ENCODE measurements at regions of chrX and their contacts with region 1.

Region 1: DNA sequence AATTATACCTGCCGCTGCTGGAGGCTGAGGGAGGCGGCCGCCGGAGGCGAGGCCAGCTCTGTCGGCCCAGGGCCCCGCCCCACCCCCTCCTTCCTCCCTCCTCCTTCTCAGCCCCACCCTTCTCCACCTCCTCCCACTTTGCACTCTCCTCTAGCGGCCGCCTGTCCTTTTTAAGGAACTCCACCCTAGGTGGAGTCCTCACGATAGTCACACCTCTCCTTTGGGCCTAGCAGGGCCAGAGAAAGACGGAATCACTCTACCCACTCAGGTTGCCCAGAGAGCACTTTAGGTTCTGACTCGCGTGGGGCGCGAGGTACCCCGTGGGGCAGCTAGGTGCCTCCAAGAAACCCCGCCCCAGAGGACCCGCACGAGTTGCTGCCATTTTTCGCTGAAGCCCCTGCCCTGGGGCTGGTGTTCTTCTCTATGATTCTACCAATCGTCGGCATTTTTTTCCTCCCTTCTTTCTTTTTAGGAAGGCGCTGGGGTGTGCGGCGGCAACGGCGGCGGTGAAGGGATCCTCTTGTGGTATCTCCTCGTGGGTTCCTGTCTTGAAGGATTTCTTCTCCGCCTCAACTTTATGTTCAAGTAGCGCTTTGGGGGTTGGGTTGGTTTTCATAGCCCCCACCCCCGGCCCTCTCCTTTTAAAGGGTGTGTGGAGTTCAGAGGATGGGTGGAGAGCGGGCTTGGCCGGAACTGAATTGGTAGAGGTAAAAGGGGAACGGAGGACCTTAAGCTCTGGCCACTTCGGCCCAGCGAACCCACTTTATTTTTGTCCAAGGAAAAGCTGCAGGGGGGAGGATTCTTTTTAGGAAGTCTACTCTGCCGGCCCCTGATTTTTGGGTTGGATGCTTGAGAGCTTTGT is at the start of gene KLF8:
- DNase-seq: no peak
- total RNA-seq, gene KLF8: 3.6 TPM

Region 2: GRCh38 chrX:55636109-55636508 is 596.3 kb before region 1 on chrX:
- intact Hi-C with region 1: no loop called
- DNase-seq: no peak

Region 3: GRCh38 chrX:55717521-55718497 is 514.6 kb before region 1 on chrX and contains the start of gene RRAGB:
- intact Hi-C with region 1: loop called (anchors 10 kb)
- DNase-seq: peak; percentile 96
- total RNA-seq, gene RRAGB: 11.9 TPM

Region 4: DNA sequence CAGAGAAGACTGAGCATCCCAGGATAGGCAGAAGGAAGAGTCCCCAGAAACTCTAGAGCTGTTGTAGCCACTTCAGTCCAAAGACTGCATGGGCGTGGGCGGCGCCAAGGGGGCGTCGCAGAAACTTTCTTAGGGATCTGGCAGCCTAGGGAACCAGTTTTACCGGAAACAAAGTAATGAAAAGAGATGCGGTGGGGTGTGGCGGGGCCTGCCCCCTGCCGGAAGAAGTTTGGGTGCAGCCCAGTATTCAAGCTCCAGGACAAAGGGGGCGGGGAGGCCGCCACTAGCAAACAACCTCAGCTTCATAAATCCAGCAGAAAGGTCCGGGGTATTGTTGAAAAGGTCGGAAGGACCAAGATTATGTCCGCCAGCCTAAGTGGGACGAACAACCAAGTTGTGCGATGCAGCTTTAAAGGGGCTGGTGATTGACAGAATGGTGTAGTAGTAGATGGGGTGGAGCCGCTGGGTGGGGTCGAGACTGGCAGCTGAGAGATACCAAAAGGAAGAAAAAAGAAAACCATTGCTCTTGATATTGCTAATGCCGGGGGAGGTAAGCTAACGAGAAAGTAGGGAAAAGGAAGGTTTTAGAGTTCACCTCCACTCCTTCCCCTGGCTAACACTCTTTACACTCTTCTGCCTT is 324.4 kb before region 1 on chrX:
- intact Hi-C with region 1: loop called (anchors 5 kb)
- DNase-seq: no peak

Region 5: GRCh38 chrX:56107273-56107672 is 125.2 kb before region 1 on chrX:
- intact Hi-C with region 1: no loop called
- DNase-seq: no peak